HEK293T (cell line): ENCODE measurements at regions of chr1 and their contacts with region 1.

Region 1: DNA sequence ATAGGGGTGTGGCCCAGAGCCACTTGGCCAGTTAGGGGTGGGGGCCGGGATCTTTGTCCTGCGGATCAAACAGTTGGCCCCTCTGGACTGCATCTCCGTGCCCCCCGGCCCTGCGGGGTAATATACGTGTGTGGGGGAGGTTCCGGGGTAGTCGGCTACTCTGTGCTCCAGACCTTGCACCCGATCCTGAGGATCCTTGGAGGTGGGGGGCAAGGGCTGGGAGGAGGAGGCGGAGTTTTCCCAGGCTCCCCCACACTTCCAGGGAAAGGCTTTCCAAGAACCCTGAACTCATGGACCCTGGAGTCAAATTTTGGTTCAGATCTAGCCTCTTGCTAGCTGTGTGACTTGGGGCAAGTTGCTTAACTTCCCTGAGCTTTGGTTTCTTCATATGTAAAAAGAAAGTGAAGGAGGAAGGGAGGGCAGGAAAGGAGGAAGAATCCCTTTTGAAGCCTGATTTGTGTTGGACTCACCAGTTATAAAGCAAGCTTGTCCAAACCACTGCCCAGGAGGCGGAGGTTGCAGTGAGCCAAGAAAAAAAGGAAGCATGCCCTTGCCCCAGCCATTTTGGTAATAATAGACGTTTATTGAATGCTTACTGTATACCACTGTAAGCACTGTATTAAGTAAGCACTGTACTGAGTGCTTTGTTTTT is 686 bp downstream of the MIIP start:
- DNase-seq: no peak

Region 2: GRCh38 chr1:11979851-11980675 is 39.9 kb before region 1 on chr1 and contains the start of gene MFN2:
- CTCF ChIA-PET with region 1: no interaction called
- POLR2A ChIA-PET with region 1: interaction called, 14 read pairs
- DNase-seq: peak; percentile 96

Region 3: DNA sequence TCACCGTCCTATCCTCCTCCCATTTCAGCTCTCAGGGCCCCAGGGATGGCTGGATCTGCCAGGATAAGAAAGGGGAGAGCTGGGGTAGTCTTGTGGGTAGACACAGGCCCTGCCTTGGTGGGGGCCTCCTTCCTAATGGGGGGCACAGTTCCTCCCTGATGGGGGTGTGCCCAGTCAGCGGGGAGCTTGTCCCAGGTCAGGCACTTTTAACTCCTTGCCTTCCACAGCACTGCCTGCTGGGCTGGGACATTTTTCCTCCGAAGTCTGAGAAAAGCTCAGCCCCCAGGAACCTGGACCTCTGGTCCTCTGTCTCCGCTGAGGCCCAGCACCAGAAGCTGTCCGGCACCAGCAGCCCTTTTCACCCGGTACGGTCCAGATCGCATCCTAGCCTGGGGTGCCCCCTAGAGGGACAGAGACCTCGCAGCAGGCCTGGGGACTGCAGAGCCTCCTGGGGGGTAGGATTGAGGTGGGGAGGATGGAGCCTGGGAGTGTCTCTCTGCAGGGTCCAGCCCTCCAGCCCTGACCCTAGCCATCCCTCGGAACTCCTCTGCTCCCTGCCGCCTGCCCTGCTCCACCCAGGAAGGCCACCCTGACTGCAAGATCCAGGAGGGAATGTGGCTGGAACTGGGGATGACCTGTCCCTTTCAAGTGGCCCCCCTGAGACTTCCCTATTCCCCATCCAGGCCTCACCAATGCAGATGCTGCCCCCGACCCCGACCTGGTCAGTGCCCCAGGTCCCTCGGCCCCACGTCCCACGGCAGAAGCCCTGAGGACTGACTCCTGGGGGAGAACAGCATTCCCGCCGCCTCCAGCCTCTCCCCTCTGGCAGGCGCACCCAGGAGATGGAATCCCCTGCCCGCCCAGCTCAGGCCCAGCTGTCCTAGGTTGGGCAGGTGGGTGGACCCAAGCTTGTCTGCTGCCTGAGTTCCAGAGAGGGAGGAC is 11.3 kb after region 1 on chr1:
- CTCF ChIA-PET with region 1: interaction called, 10 read pairs
- POLR2A ChIA-PET with region 1: interaction called, 10 read pairs
- DNase-seq: peak; percentile 54

Region 4: GRCh38 chr1:12501661-12502060 is 481.7 kb after region 1 on chr1:
- CTCF ChIA-PET with region 1: no interaction called
- POLR2A ChIA-PET with region 1: no interaction called
- DNase-seq: no peak